ENCODE measurements at regions of chr7 and their contacts with region 1.

Region 1: DNA sequence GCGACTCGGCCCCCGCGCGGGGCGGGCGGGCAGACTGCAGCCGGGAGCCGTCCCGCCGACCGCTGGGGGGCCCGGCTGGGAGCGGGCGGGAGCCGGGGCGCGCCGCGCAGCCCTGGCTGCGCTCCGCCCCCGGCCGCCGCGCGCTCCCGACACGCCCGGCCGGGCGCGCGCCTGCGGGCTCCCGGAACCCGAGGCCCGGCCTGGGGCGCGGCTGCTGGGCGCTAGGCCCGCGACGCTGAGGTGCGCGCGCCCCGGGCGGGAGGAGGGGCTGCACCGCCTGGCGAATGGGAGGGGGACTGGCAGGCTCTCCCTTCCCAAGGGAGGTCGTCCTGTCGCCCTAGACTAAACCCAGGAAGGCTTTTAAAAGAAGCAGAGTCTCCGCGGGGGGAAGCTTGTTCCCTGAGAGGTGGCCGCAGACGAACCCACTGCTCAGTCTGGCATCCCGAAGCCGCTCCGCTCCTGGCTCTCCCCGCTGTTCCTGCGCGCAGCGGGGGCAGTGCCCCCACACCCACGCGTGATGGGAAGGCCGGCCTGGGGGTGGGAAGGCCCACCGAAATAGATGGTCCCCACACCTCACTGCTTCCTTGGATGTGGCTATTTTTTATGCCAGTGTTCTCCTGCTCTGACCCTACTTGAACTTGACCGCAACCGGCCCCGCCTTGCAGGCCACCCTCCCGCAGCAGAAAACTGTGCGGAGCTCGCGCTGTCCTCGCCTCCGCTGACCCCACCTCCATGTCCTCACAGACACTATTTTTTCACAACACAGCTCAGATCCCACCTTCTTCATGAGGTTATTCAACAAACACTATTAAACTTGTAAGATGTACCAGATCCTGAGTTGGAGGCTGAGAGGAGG is at the start of gene VOPP1:
- DNase-seq: peak; percentile 54
- H3K4me3 ChIP-seq: peak within 1 kb of the TSS; percentile 63 to 87 (median 64)
- H3K27ac ChIP-seq: peak within 1 kb of the TSS; percentile 87
- H3K4me1 ChIP-seq: peaks cover 43% of the 10 kb centered on the region
- H3K27me3 ChIP-seq: no peaks in the 10 kb centered on the region
- CTCF ChIP-seq: no peak
- total RNA-seq, gene VOPP1: 43.2 to 65.3 TPM

Region 2: GRCh38 chr7:55534175-55534915 is 38.3 kb before region 1 on chr7:
- CTCF ChIA-PET with region 1: no interaction called
- dilution Hi-C with region 1: no loop called
- in situ Hi-C with region 1: no loop called
- intact Hi-C with region 1: loop called (anchors 5 kb)
- DNase-seq: peak; percentile 97
- H3K4me3 ChIP-seq: no peak overlapping the region
- H3K27ac ChIP-seq: peak overlapping the region; percentile 65
- H3K4me1 ChIP-seq: peaks cover 54% of the 10 kb centered on the region
- H3K27me3 ChIP-seq: no peaks in the 10 kb centered on the region
- CTCF ChIP-seq: no peak

Region 3: GRCh38 chr7:55546829-55547228 is 25.8 kb before region 1 on chr7:
- CTCF ChIA-PET with region 1: no interaction called
- dilution Hi-C with region 1: no loop called
- in situ Hi-C with region 1: no loop called
- intact Hi-C with region 1: loop called (anchors 1 kb)
- DNase-seq: peak; percentile 94
- H3K4me3 ChIP-seq: no peak overlapping the region
- H3K27ac ChIP-seq: peak overlapping the region; percentile 12
- H3K4me1 ChIP-seq: peaks cover 49% of the 10 kb centered on the region
- H3K27me3 ChIP-seq: no peaks in the 10 kb centered on the region
- CTCF ChIP-seq: no peak

Region 4: GRCh38 chr7:55622241-55622640 is 49.6 kb after region 1 on chr7:
- CTCF ChIA-PET with region 1: no interaction called
- dilution Hi-C with region 1: no loop called
- in situ Hi-C with region 1: no loop called
- intact Hi-C with region 1: no loop called
- DNase-seq: no peak
- H3K4me3 ChIP-seq: no peak overlapping the region
- H3K27ac ChIP-seq: no peak overlapping the region
- H3K4me1 ChIP-seq: peaks cover 6% of the 10 kb centered on the region
- H3K27me3 ChIP-seq: no peaks in the 10 kb centered on the region
- CTCF ChIP-seq: no peak

Measured in mammary epithelial cell (primary cell).